ENCODE measurements at regions of chr1 and their contacts with region 1.

Region 1: DNA sequence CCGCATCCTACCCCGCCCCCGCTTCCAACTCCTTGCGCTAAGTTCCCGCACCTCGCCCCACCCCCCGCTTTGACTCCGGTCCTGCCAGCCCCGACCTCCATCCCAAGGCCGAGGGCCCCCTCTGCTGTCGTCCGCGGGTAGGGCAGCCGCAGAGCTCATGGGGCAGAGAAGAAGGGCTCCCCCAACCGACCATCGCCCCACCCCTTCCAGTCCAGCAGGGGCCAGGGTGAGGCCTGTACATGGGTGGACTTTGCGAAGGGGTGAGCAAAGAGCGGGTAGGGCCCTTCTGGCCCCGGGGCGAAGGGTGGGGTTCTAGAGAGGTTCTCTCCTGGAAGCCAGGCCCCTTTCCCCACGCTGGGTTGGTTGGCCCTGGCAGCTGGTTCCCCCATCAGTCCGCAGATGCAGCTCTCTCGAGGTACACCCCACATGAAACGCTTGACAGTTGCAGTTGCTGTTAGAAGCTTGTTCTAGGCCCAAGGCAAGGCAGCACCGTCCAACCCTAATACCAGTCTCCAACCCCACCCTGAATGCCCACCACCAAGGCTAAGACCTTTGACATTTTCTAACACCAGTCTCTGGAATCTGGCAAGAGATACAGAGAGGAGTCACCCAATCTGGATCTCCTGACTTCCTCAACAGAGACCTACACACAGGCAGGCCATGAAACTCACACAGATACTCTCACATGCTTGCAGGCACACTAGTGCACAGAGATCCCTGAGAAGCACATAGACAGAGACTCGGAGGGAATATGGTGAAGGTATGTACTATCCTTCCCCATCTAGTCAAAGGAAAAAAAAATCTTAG is 25.3 kb upstream of the ADGRB2 start:
- DNase-seq: peak; percentile 75
- H3K4me3 ChIP-seq: peak overlapping the region; percentile 52 to 66 (median 60)
- H3K27ac ChIP-seq: no peak overlapping the region
- H3K4me1 ChIP-seq: peaks cover 13% of the 10 kb centered on the region
- H3K27me3 ChIP-seq: no peaks in the 10 kb centered on the region
- CTCF ChIP-seq: peak; percentile 79 to 98

Region 2: DNA sequence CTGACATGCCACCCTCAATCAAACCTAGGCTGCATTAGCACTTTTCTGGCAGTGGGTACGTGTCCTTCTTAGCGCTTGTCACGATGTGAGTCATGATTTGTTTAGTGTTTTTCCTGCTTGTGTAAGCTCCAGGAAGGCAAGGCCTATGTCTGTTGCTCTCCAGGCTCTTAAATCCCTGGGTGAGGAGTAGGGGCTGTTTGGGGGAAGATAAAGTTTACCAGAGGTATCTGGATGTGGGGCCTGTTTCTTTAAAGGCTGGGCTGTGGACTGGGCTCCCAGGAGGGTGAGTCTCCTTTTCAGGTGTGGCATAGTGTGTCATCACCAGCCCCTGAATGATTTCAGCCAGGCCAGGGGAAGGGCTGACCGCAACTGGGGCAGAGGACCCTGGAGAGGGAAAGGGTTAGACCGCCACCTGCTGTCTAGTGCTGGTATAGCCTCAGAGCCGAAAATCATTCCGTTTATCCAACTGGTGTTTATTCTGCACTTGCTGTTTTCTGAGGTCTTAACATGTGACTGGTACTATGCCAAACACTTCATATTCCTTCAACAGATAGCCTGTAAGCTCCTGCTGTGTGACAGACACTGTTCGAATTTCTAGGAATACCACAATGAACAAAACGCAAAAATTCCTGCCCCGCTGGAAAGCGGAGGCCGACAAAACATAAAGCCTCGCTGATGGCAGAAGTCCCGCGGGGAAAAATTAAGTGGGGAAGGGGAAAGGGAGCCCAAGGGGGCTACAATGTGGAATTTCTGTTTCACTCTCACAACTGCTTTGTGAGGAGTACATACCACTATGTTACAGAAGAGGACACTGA is 366.8 kb before region 1 on chr1:
- CTCF ChIA-PET with region 1: interaction called, 11 read pairs
- dilution Hi-C with region 1: no loop called
- in situ Hi-C with region 1: loop called in 1 of 2 experiments (anchors 25 kb)
- intact Hi-C with region 1: no loop called
- DNase-seq: peak; percentile 95
- H3K4me3 ChIP-seq: no peak overlapping the region
- H3K27ac ChIP-seq: peak overlapping the region; percentile 85
- H3K4me1 ChIP-seq: peaks cover 86% of the 10 kb centered on the region
- H3K27me3 ChIP-seq: no peaks in the 10 kb centered on the region
- CTCF ChIP-seq: peak; percentile 96 to 98

Region 3: GRCh38 chr1:31548907-31549808 is 240.3 kb before region 1 on chr1:
- CTCF ChIA-PET with region 1: interaction called, 33 read pairs
- dilution Hi-C with region 1: no loop called
- in situ Hi-C with region 1: loop called in 1 of 2 experiments (anchors 25 kb)
- intact Hi-C with region 1: loop called (anchors 1 kb)
- DNase-seq: peak; percentile 89
- H3K4me3 ChIP-seq: peak overlapping the region; percentile 7 to 47 (median 30)
- H3K27ac ChIP-seq: peak overlapping the region; percentile 23
- H3K4me1 ChIP-seq: peaks cover 19% of the 10 kb centered on the region
- H3K27me3 ChIP-seq: no peaks in the 10 kb centered on the region
- CTCF ChIP-seq: peak; percentile 84

Region 4: GRCh38 chr1:31593770-31594632 is 195.5 kb before region 1 on chr1:
- CTCF ChIA-PET with region 1: no interaction called
- dilution Hi-C with region 1: no loop called
- in situ Hi-C with region 1: no loop called
- intact Hi-C with region 1: loop called (anchors 1 kb)
- DNase-seq: peak; percentile 73
- H3K4me3 ChIP-seq: no peak overlapping the region
- H3K27ac ChIP-seq: no peak overlapping the region
- H3K4me1 ChIP-seq: peaks cover 13% of the 10 kb centered on the region
- H3K27me3 ChIP-seq: no peaks in the 10 kb centered on the region
- CTCF ChIP-seq: peak; percentile 96 to 97

Region 5: GRCh38 chr1:31714442-31715086 is 74.9 kb before region 1 on chr1:
- CTCF ChIA-PET with region 1: interaction called, 4 read pairs
- dilution Hi-C with region 1: loop called (anchors 5 kb)
- in situ Hi-C with region 1: no loop called
- intact Hi-C with region 1: loop called (anchors 2 kb)
- DNase-seq: no peak
- H3K4me3 ChIP-seq: no peak overlapping the region
- H3K27ac ChIP-seq: no peak overlapping the region
- H3K4me1 ChIP-seq: peaks cover 40% of the 10 kb centered on the region
- H3K27me3 ChIP-seq: no peaks in the 10 kb centered on the region
- CTCF ChIP-seq: no peak

Region 6: GRCh38 chr1:32013386-32014198 is 224.1 kb after region 1 on chr1 and contains the start of gene KHDRBS1:
- CTCF ChIA-PET with region 1: no interaction called
- dilution Hi-C with region 1: no loop called
- in situ Hi-C with region 1: no loop called
- intact Hi-C with region 1: no loop called
- DNase-seq: peak; percentile 97
- H3K4me3 ChIP-seq: peak within 1 kb of the TSS; percentile 74 to 96 (median 84)
- H3K27ac ChIP-seq: peak within 1 kb of the TSS; percentile 87
- H3K4me1 ChIP-seq: peaks cover 17% of the 10 kb centered on the region
- H3K27me3 ChIP-seq: no peaks in the 10 kb centered on the region
- CTCF ChIP-seq: no peak
- total RNA-seq, gene KHDRBS1: 39.8 to 109 TPM

Measured in mammary epithelial cell (primary cell).